T-cell (primary cell): ENCODE measurements at regions of chr17 and their contacts with region 1.

Region 1: GRCh38 chr17:67602956-67603355 is 114.8 kb upstream of the NOL11 start:
- DNase-seq: peak in 33 of 35 experiments; percentile 7 to 71 (median 43)
- ATAC-seq: peak; percentile 54 to 80 (median 65)
- H3K4me3 ChIP-seq: no peak overlapping the region
- H3K4me3 Mint-ChIP-seq: no peak overlapping the region
- H3K27ac ChIP-seq: no peak overlapping the region
- H3K27ac Mint-ChIP-seq: peak overlapping the region; percentile 39 to 74
- H3K4me1 ChIP-seq: peaks cover 0 to 3% of the 10 kb centered on the region in 2 experiments
- H3K4me1 Mint-ChIP-seq: peaks cover 26 to 31% (median 28%) of the 10 kb centered on the region in 3 donors
- H3K27me3 ChIP-seq: no peaks in the 10 kb centered on the region
- H3K27me3 Mint-ChIP-seq: no peaks in the 10 kb centered on the region

Region 2: GRCh38 chr17:67520252-67520906 is 82.6 kb before region 1 on chr17:
- CTCF ChIA-PET with region 1: no interaction called
- POLR2A ChIA-PET with region 1: interaction called in 1 of 2 experiments, 10 read pairs
- DNase-seq: peak in 2 of 35 experiments; percentile 14 to 21
- ATAC-seq: peak in 2 of 4 experiments; percentile 23 to 46
- H3K4me3 ChIP-seq: no peak overlapping the region
- H3K4me3 Mint-ChIP-seq: peak overlapping the region in 2 of 3 donors; percentile 4 to 56
- H3K27ac ChIP-seq: peak overlapping the region; percentile 8
- H3K27ac Mint-ChIP-seq: peak overlapping the region; percentile 76 to 89
- H3K4me1 ChIP-seq: peaks cover 9 to 13% of the 10 kb centered on the region in 2 experiments
- H3K4me1 Mint-ChIP-seq: peaks cover 63 to 73% (median 72%) of the 10 kb centered on the region in 3 donors
- H3K27me3 ChIP-seq: no peaks in the 10 kb centered on the region
- H3K27me3 Mint-ChIP-seq: no peaks in the 10 kb centered on the region

Region 3: GRCh38 chr17:67575325-67575724 is 27.6 kb before region 1 on chr17:
- CTCF ChIA-PET with region 1: interaction called, 3 read pairs
- POLR2A ChIA-PET with region 1: interaction called in 1 of 2 experiments, 13 read pairs
- DNase-seq: no peak
- ATAC-seq: no peak
- H3K4me3 ChIP-seq: no peak overlapping the region
- H3K4me3 Mint-ChIP-seq: no peak overlapping the region
- H3K27ac ChIP-seq: no peak overlapping the region
- H3K27ac Mint-ChIP-seq: no peak overlapping the region
- H3K4me1 ChIP-seq: no peaks in the 10 kb centered on the region
- H3K4me1 Mint-ChIP-seq: peaks cover 22 to 42% (median 32%) of the 10 kb centered on the region in 3 donors
- H3K27me3 ChIP-seq: no peaks in the 10 kb centered on the region
- H3K27me3 Mint-ChIP-seq: no peaks in the 10 kb centered on the region

Region 4: GRCh38 chr17:67619555-67619954 is 16.6 kb after region 1 on chr17:
- CTCF ChIA-PET with region 1: no interaction called
- POLR2A ChIA-PET with region 1: interaction called in 1 of 2 experiments, 10 read pairs
- DNase-seq: no peak
- ATAC-seq: no peak
- H3K4me3 ChIP-seq: no peak overlapping the region
- H3K4me3 Mint-ChIP-seq: no peak overlapping the region
- H3K27ac ChIP-seq: no peak overlapping the region
- H3K27ac Mint-ChIP-seq: no peak overlapping the region
- H3K4me1 ChIP-seq: no peaks in the 10 kb centered on the region
- H3K4me1 Mint-ChIP-seq: peaks cover 4 to 17% (median 7%) of the 10 kb centered on the region in 3 donors
- H3K27me3 ChIP-seq: no peaks in the 10 kb centered on the region
- H3K27me3 Mint-ChIP-seq: no peaks in the 10 kb centered on the region